ENCODE measurements at regions of chr4 and their contacts with region 1.

Region 1: GRCh38 chr4:76515975-76516843 is 81.2 kb downstream of the SHROOM3 start:
- DNase-seq: no peak
- ATAC-seq: no peak
- H3K4me3 ChIP-seq: no peak overlapping the region
- H3K27ac ChIP-seq: no peak overlapping the region
- H3K4me1 ChIP-seq: peaks cover 3 to 4% of the 10 kb centered on the region in 2 donors
- H3K27me3 ChIP-seq: no peaks in the 10 kb centered on the region

Region 2: GRCh38 chr4:76315267-76315918 is 200.8 kb before region 1 on chr4:
- intact Hi-C with region 1: no loop called
- DNase-seq: no peak
- ATAC-seq: no peak
- H3K4me3 ChIP-seq: no peak overlapping the region
- H3K27ac ChIP-seq: no peak overlapping the region
- H3K4me1 ChIP-seq: no peaks in the 10 kb centered on the region
- H3K27me3 ChIP-seq: no peaks in the 10 kb centered on the region

Region 3: GRCh38 chr4:76569225-76569624 is 53.0 kb after region 1 on chr4:
- intact Hi-C with region 1: loop called in 1 of 2 experiments (anchors 5 kb)
- DNase-seq: no peak
- ATAC-seq: no peak
- H3K4me3 ChIP-seq: no peak overlapping the region
- H3K27ac ChIP-seq: no peak overlapping the region
- H3K4me1 ChIP-seq: peaks cover 2 to 11% of the 10 kb centered on the region in 2 donors
- H3K27me3 ChIP-seq: no peaks in the 10 kb centered on the region

Region 4: GRCh38 chr4:76585897-76586360 is 69.7 kb after region 1 on chr4:
- intact Hi-C with region 1: loop called in 1 of 2 experiments (anchors 10 kb)
- DNase-seq: peak; percentile 80 to 91
- ATAC-seq: peak; percentile 79
- H3K4me3 ChIP-seq: peak overlapping the region; percentile 76 to 81
- H3K27ac ChIP-seq: peak overlapping the region; percentile 92 to 95
- H3K4me1 ChIP-seq: peaks cover 0 to 6% of the 10 kb centered on the region in 2 donors
- H3K27me3 ChIP-seq: no peaks in the 10 kb centered on the region

Region 5: GRCh38 chr4:76611164-76611911 is 95.1 kb after region 1 on chr4:
- intact Hi-C with region 1: loop called (anchors 5 to 10 kb)
- DNase-seq: peak in 1 of 2 donors; percentile 58
- ATAC-seq: peak; percentile 83
- H3K4me3 ChIP-seq: no peak overlapping the region
- H3K27ac ChIP-seq: peak overlapping the region; percentile 12 to 99
- H3K4me1 ChIP-seq: peaks cover 15 to 37% of the 10 kb centered on the region in 2 donors
- H3K27me3 ChIP-seq: no peaks in the 10 kb centered on the region

Region 6: GRCh38 chr4:76758290-76758882 is 242.2 kb after region 1 on chr4:
- intact Hi-C with region 1: loop called (anchors 2 kb)
- DNase-seq: no peak
- ATAC-seq: peak; percentile 74
- H3K4me3 ChIP-seq: no peak overlapping the region
- H3K27ac ChIP-seq: peak overlapping the region in 1 of 2 donors; percentile 70
- H3K4me1 ChIP-seq: peaks cover 0 to 4% of the 10 kb centered on the region in 2 donors
- H3K27me3 ChIP-seq: no peaks in the 10 kb centered on the region

Region 7: GRCh38 chr4:77044461-77045150 is 528.4 kb after region 1 on chr4:
- intact Hi-C with region 1: loop called in 1 of 2 experiments (anchors 10 kb)
- DNase-seq: no peak
- ATAC-seq: peak; percentile 55
- H3K4me3 ChIP-seq: no peak overlapping the region
- H3K27ac ChIP-seq: peak overlapping the region in 1 of 2 donors; percentile 28
- H3K4me1 ChIP-seq: peaks cover 0 to 4% of the 10 kb centered on the region in 2 donors
- H3K27me3 ChIP-seq: no peaks in the 10 kb centered on the region

Region 8: GRCh38 chr4:77203380-77204197 is 687.4 kb after region 1 on chr4:
- intact Hi-C with region 1: loop called in 1 of 2 experiments (anchors 5 kb)
- DNase-seq: peak in 1 of 2 donors; percentile 59
- ATAC-seq: peak; percentile 68
- H3K4me3 ChIP-seq: no peak overlapping the region
- H3K27ac ChIP-seq: no peak overlapping the region
- H3K4me1 ChIP-seq: no peaks in the 10 kb centered on the region
- H3K27me3 ChIP-seq: no peaks in the 10 kb centered on the region

Measured in aorta (tissue), 5 donors.